GM12878 (cell line): ENCODE measurements at regions of chr6 and their contacts with region 1.

Region 1: GRCh38 chr6:111793711-111794111 is 79.5 kb downstream of the FYN start:
- DNase-seq: no peak
- ATAC-seq: peak; percentile 82
- H3K4me3 ChIP-seq: peak overlapping the region; percentile 66
- H3K27ac ChIP-seq: peak overlapping the region; percentile 85
- H3K4me1 ChIP-seq: peaks cover 36% of the 10 kb centered on the region
- H3K27me3 ChIP-seq: no peaks in the 10 kb centered on the region
- CTCF ChIP-seq: no peak
- EP300 ChIP-seq: no peak
- POLR2A ChIP-seq: peak; percentile 56
- RAD21 ChIP-seq: no peak

Region 2: GRCh38 chr6:111076024-111076695 is 717.6 kb before region 1 on chr6:
- CTCF ChIA-PET with region 1: no interaction called
- POLR2A ChIA-PET with region 1: no interaction called
- RAD21 ChIA-PET with region 1: no interaction called
- SMC1A ChIA-PET with region 1: no interaction called
- in situ Hi-C with region 1: no loop called
- intact Hi-C with region 1: no loop called
- DNase-seq: no peak
- ATAC-seq: peak; percentile 45
- H3K4me3 ChIP-seq: no peak overlapping the region
- H3K27ac ChIP-seq: no peak overlapping the region
- H3K4me1 ChIP-seq: no peaks in the 10 kb centered on the region
- H3K27me3 ChIP-seq: no peaks in the 10 kb centered on the region
- CTCF ChIP-seq: no peak
- EP300 ChIP-seq: no peak
- POLR2A ChIP-seq: no peak
- RAD21 ChIP-seq: no peak

Region 3: DNA sequence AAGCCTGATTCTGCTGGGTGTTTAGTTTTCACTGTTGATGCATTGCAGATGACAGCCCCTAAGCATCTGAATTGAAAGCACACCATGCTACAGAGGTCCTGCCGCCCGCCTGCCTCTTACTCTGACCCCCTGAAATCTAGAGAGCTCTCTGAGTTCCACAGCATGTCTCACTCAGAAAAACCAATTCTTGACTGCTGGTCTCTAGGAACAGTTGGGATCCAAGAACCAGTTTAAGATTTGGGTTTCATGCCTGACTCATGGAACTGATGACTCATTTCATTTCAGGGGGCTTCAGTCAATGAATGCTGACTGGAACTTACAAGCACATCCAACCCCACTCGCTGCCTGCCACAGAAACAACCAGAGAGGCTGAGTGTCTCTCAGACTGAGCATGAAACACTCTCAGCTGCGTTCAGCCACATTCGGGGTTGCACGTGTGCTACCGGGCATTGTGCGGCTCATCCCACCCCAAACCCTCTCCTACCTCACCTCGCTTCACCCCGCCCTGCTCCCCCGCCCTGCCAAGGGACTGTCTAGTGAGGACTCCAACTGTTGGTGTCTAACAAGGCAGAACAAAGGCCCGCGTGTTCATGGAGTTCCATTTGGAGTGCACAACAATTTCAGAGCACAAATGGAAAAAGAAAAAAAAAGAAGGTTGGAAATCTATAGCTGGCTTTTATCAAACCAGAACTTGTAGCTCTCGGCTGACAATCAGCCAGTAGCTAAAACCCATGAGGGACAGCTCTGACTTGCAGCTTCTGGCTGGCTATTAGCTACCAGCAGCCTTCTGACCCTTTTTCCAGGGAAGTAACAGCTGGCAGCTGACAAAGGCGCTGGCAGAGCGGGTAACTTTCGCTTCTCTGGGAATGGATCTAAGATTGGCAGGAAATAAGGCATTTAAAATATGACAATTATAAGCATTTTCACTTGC is 168.0 kb before region 1 on chr6:
- CTCF ChIA-PET with region 1: no interaction called
- POLR2A ChIA-PET with region 1: no interaction called
- RAD21 ChIA-PET with region 1: no interaction called
- SMC1A ChIA-PET with region 1: no interaction called
- in situ Hi-C with region 1: no loop called
- intact Hi-C with region 1: no loop called
- DNase-seq: no peak
- ATAC-seq: no peak
- H3K4me3 ChIP-seq: no peak overlapping the region
- H3K27ac ChIP-seq: no peak overlapping the region
- H3K4me1 ChIP-seq: no peaks in the 10 kb centered on the region
- H3K27me3 ChIP-seq: peaks cover 0 to 4% of the 10 kb centered on the region in 2 experiments; a peak in 1 of 4 replicates
- CTCF ChIP-seq: no peak
- EP300 ChIP-seq: no peak
- POLR2A ChIP-seq: no peak
- RAD21 ChIP-seq: no peak

Region 4: DNA sequence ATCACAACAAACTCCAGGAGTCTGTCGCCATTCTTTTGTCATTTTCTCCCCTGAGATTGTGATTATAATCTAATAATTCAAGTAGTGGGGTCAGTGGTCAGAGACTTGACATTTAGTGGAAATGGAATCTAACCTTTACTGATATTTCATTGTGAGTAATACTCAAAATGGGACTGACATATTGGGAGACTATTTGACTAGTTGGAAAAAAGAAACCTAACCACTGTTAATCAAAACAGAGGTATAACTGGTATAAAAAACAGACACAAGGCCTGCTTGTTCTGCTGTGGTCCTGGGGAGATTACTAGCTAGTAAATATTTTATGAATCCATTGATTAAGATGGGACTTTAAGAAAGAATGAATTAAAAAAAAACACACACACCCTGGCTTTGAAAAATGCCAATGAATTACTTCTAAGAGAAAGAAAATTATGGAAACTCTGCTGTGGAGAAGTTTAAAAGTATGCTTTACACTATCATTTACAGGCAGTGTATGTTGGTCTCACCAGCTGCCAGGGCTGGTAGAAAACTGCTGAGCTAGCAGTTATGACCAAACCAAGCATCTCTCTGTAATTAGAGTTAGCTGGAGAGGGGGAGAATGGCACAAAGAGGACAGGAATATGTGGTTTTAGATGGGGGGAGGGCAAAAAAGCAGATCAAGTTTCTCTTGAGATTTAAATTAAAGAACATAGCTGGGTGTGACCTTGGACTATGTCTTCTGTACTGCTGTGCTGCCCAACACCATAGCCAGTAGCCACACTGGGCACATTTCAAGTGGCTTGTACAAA is 24.2 kb before region 1 on chr6:
- CTCF ChIA-PET with region 1: interaction called, 9 read pairs
- POLR2A ChIA-PET with region 1: interaction called, 21 read pairs
- RAD21 ChIA-PET with region 1: interaction called, 37 read pairs
- SMC1A ChIA-PET with region 1: interaction called, 48 read pairs
- in situ Hi-C with region 1: no loop called
- intact Hi-C with region 1: loop called (anchors 2 kb)
- DNase-seq: no peak
- ATAC-seq: no peak
- H3K4me3 ChIP-seq: no peak overlapping the region
- H3K27ac ChIP-seq: peak overlapping the region; percentile 93
- H3K4me1 ChIP-seq: peaks cover 57% of the 10 kb centered on the region
- H3K27me3 ChIP-seq: no peaks in the 10 kb centered on the region
- CTCF ChIP-seq: no peak
- EP300 ChIP-seq: no peak
- POLR2A ChIP-seq: no peak
- RAD21 ChIP-seq: no peak

Region 5: DNA sequence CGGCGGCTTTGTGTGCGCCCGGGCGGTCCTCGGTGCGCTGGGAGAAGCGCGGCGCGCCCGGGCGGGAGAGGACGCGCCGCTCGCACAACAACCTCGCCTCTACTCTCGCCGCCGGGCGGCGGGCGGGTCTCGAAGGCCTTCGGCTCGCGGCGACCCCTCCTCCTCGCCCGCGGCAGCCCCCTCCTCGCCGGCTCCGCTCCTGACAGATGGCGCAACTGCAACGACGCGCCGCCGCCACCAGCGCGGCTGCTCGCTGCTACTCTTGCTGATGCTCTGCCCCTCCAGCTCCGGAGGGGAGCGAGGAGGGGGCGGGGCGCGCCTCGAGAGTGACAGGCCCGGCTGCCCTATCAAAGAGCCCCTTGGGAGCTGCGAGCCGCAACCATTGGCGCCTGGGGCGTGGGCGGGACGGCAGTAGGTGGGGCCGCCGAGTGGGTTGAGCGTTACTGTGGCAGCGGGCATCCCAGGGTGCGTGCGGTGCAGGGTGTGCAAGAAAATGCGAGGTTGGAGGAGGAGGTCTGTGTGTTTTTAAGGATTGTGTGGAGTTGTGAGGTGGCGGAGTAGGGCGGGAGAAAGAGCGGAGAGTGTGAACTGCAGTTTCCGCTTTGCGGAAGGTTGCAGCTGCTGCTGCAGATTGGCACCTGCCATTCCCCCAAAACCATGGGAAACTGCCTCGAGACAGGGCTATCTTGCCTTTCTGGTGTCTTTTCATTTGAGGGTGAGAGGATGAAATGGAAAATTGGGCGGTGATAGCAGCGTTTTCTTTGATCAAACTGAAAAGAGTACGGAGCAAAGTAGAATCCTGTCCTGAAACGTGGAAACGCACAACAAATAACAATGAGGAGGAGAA is 79.7 kb after region 1 on chr6 and contains the start of gene FYN:
- CTCF ChIA-PET with region 1: interaction called, 4 read pairs
- POLR2A ChIA-PET with region 1: interaction called, 3 read pairs
- RAD21 ChIA-PET with region 1: interaction called, 4 read pairs
- SMC1A ChIA-PET with region 1: interaction called, 6 read pairs
- in situ Hi-C with region 1: no loop called
- intact Hi-C with region 1: loop called (anchors 5 kb)
- DNase-seq: peak; percentile 76
- ATAC-seq: peak; percentile 92
- H3K4me3 ChIP-seq: peak within 1 kb of the TSS; percentile 98
- H3K27ac ChIP-seq: peak within 1 kb of the TSS; percentile 76
- H3K4me1 ChIP-seq: peaks cover 5% of the 10 kb centered on the region
- H3K27me3 ChIP-seq: no peaks in the 10 kb centered on the region
- CTCF ChIP-seq: peak; percentile 28 to 65 (median 30); a peak in 5 of 6 replicates
- EP300 ChIP-seq: no peak
- POLR2A ChIP-seq: peak; percentile 95
- RAD21 ChIP-seq: peak; percentile 48
- polyA plus RNA-seq, gene FYN: 51.4 to 55.1 TPM